Endothelial cell of umbilical vein (primary cell): ENCODE measurements at regions of chr12 and their contacts with region 1.

Region 1: GRCh38 chr12:48903982-48904411 is 21.3 kb downstream of the FKBP11 start:
- DNase-seq: peak; percentile 76
- H3K4me3 ChIP-seq: peak overlapping the region in 2 of 3 experiments; percentile 32 to 46
- H3K27ac ChIP-seq: no peak overlapping the region
- H3K4me1 ChIP-seq: peaks cover 3% of the 10 kb centered on the region
- H3K27me3 ChIP-seq: no peaks in the 10 kb centered on the region
- CTCF ChIP-seq: peak; percentile 62 to 77
- POLR2A ChIP-seq: no peak

Region 2: DNA sequence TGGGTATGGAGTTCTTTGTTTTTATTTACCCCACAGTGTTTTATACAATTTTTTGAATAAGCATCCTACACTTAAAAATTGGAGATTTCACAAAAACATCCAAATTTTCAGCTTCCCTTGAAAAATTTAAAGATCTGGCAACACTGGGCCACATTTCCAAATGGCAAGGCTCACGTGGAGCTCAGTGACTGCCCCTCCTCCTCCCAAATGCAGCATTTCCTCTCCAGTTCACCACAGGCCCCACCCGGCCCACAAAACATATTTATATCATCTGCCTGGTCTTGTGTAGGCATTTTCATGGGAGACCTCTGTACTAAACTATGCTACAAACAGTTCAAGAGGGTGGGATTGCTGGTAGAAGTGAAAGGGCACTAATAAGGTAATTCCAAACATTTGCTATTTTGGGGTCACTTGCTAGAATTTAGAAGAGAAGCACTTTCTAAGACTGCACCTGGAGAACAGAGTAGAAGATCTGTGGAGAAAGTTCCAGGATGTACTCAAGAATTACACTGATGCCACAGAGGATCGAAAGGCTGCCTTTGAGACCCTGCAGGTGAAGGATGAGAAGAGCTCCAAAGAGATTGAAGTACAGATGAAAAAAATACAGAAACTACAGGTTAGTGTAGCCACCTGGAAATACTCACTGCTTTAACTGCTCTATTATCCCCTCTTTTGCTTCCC is 14.0 kb after region 1 on chr12:
- CTCF ChIA-PET with region 1: interaction called, 15 read pairs
- POLR2A ChIA-PET with region 1: no interaction called
- dilution Hi-C with region 1: no loop called
- intact Hi-C with region 1: no loop called
- DNase-seq: no peak
- H3K4me3 ChIP-seq: no peak overlapping the region
- H3K27ac ChIP-seq: no peak overlapping the region
- H3K4me1 ChIP-seq: no peaks in the 10 kb centered on the region
- H3K27me3 ChIP-seq: no peaks in the 10 kb centered on the region
- CTCF ChIP-seq: no peak
- POLR2A ChIP-seq: no peak

Region 3: DNA sequence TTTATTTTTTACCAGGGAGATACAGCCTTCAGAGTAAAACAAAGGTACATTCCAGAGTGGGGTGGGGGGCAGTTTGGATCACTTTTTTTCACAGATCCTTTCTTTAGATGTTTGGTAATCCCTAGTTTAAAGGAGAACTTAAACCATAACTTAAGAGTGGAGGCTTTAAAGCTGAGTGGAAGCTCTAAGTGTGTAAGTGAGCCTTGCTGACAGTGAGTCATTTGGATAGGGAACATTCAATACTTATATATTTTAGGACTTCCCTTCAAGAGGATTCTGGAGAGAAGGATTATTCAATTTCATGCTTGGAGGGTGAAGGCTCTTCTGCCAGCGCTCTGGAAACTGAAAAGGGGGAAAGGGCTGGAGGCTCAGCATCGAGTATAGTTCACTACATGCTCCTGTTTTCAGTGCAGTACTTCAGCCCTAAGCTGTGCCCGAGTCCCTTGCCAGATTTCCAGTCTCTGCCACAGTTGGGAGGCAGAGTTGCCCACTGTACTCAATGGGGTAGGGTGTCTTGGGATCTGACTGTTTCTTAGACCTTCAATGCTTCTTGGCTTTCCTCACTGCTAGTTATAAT is 106.2 kb after region 1 on chr12:
- CTCF ChIA-PET with region 1: no interaction called
- POLR2A ChIA-PET with region 1: no interaction called
- dilution Hi-C with region 1: no loop called
- intact Hi-C with region 1: no loop called
- DNase-seq: no peak
- H3K4me3 ChIP-seq: no peak overlapping the region
- H3K27ac ChIP-seq: no peak overlapping the region
- H3K4me1 ChIP-seq: no peaks in the 10 kb centered on the region
- H3K27me3 ChIP-seq: no peaks in the 10 kb centered on the region
- CTCF ChIP-seq: no peak
- POLR2A ChIP-seq: no peak